H1 (cell line): ENCODE measurements at regions of chr10 and their contacts with region 1.

Region 1: DNA sequence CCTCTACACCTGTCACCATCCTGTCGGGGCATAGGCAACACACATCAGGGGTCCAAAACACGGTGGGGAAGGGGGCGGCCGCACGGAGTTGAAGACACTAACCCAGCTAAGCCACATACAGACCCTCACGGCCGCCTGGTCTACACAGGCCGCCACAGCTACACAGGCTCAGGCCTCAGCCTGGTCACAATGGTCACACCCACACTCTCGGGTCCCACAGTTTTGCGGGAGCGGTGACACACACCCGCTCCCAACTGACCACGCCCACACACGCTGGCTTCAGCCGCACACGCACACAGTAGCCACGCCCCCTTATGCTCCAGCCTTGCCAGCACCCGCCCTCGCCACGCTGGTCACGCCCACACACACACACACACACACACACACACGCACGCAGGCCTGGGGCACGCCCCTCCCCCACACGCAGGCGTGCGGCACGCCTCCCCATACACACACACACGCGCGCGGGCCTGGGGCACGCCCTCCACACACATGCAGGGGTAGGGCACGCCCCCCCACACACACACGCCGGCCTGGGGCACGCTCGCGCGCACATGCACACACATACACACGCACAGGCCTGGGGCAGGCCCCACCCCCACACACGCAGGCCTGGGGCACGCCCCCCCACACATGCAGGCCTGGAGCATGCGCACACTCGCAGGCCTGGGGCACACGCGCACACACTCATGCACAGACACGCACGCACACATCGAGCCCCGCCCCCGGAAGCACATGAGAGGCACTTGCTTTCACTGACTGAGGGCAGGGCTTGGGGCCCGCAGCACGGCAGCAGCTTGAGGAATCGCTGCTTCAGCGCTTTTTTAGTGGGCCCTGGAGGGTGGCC is 12.3 kb upstream of the OGA start:
- DNase-seq: peak in 1 of 2 experiments; percentile 90
- H3K4me3 ChIP-seq: peak overlapping the region; percentile 44 to 66 (median 48)
- H3K27ac ChIP-seq: no peak overlapping the region
- H3K4me1 ChIP-seq: peaks cover 9 to 22% (median 17%) of the 10 kb centered on the region in 4 experiments
- H3K27me3 ChIP-seq: no peaks in the 10 kb centered on the region
- CTCF ChIP-seq: no peak
- EP300 ChIP-seq: no peak
- POLR2A ChIP-seq: no peak
- RAD21 ChIP-seq: no peak

Region 2: GRCh38 chr10:101803511-101803910 is 27.0 kb before region 1 on chr10:
- CTCF ChIA-PET with region 1: no interaction called
- POLR2A ChIA-PET with region 1: no interaction called
- DNase-seq: no peak
- H3K4me3 ChIP-seq: no peak overlapping the region
- H3K27ac ChIP-seq: no peak overlapping the region
- H3K4me1 ChIP-seq: no peaks in the 10 kb centered on the region
- H3K27me3 ChIP-seq: no peaks in the 10 kb centered on the region
- CTCF ChIP-seq: no peak
- EP300 ChIP-seq: no peak
- POLR2A ChIP-seq: no peak
- RAD21 ChIP-seq: no peak

Region 3: DNA sequence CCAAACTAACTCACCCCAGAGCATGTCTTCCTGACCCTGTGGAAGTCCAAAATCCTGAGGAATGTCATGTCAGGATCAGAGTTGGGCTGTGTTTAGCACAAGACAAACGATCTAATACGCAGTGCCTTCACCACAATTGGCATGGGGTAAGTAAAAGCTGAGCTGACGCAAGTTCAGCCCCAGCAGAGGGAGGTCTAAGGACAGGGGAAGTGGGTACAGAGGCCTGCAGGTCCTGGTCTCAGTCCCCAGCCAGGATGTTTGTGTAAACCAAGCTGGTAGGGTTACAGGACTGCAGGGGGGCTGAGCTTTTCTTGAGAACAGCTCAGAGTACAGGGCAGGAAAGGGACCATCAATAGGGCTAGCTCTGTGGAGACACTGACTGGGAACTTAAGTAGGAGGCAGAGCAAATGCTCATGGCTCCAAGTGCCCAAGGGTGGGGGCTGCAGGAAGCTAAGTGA is 18.4 kb after region 1 on chr10:
- CTCF ChIA-PET with region 1: interaction called, 15 read pairs
- POLR2A ChIA-PET with region 1: no interaction called
- DNase-seq: no peak
- H3K4me3 ChIP-seq: no peak overlapping the region
- H3K27ac ChIP-seq: no peak overlapping the region
- H3K4me1 ChIP-seq: peaks cover 0 to 19% (median 4%) of the 10 kb centered on the region in 4 experiments; a peak in 5 of 7 replicates
- H3K27me3 ChIP-seq: no peaks in the 10 kb centered on the region; a peak in 1 of 7 replicates
- CTCF ChIP-seq: no peak
- EP300 ChIP-seq: no peak
- POLR2A ChIP-seq: no peak
- RAD21 ChIP-seq: no peak